WTC11 (cell line): ENCODE measurements at regions of chr14 and their contacts with region 1.

Region 1: DNA sequence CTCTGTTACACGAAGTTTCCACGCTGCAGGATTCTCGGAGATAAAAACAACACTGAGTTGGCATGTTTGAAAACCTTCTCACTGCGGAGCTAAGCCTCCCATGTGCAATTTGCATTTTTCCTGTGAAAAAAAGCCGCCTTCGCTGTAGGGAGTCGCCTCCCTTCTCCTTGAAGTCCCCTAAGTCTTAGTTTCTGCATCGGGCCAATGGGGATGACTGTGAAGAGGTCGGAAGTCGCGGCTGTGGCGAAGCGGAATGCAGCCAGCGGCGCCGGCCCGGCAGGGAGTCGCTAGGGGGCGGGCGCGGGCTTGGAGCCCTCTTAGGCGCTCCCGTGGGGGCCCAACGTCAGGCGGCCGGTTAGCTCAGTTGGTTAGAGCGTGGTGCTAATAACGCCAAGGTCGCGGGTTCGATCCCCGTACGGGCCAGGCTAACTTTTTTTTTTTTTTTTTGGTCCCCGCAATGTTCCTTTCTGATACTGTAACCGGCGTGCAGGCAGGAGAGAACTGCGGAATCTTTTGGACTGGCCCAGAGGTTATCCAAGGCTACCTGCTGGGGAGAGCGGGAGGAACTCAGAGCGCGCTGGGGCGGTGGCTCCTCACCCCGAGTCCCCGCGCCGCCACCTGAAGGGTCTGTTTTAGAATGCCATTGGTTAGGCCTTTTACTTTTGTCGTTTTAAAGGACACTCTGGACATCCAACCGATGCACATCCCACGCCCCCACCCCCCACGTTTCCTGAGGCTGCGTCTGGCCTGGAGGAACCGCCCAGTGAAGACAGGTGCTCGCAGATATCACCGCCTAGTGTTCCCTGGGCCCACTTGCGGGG is 2.6 kb upstream of the ZNF839 start:
- DNase-seq: peak; percentile 92
- ATAC-seq: peak; percentile 66
- H3K4me3 Mint-ChIP-seq: peak overlapping the region; percentile 93
- H3K27ac Mint-ChIP-seq: peak overlapping the region; percentile 98
- H3K4me1 Mint-ChIP-seq: peaks cover 49% of the 10 kb centered on the region
- H3K27me3 Mint-ChIP-seq: peaks cover 25% of the 10 kb centered on the region
- CTCF ChIP-seq: no peak

Region 2: GRCh38 chr14:102046343-102047278 is 270.3 kb before region 1 on chr14:
- CTCF ChIA-PET with region 1: interaction called, 21 read pairs
- POLR2A ChIA-PET with region 1: interaction called, 3 read pairs
- DNase-seq: peak; percentile 93
- ATAC-seq: peak; percentile 99
- H3K4me3 Mint-ChIP-seq: no peak overlapping the region
- H3K27ac Mint-ChIP-seq: peak overlapping the region; percentile 84
- H3K4me1 Mint-ChIP-seq: peaks cover 3% of the 10 kb centered on the region
- H3K27me3 Mint-ChIP-seq: no peaks in the 10 kb centered on the region
- CTCF ChIP-seq: no peak

Region 3: DNA sequence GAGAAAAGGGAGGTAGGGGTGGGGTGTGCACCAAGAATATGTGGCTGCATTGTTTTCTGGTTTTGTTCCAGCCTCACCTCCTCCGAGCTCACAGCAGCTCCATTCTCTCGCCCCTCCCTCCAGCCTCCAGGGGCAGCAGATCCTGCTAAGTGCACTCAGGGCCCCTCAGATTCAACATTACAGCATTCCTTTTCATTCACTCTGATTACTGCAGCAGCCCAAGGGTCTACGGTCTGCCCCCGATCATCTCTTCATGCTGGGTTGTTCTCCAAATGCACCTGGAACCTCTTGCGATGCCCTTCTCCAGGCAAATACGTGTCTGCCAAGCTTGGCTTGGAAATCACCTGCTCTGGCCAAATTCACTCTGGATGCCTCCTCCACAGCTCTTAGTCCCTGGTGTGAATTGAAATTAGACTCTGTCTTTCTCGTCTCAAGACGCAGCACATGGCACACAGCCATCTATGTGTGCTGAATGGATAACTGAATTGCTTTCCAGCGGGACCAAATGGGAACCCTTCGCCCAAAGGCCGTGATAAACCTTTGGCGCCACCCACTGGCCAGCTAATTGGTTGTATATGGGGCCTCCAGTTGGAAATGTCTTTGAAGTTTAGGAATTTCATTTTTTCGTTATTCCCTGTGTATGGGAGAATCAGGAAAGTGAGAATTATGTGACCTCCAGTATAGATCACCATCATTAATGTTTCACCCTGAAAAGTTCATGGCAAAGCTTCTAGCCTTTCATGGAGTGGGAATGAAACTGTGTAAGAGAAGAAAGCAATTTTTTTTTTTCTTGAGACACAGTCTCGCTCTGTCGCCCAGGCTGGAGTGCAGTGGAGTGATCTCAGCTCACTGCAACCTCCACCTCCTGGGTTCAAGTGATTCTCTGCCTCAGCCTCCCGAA is 220.5 kb before region 1 on chr14:
- CTCF ChIA-PET with region 1: interaction called, 11 read pairs
- POLR2A ChIA-PET with region 1: interaction called, 4 read pairs
- DNase-seq: peak; percentile 87
- ATAC-seq: peak; percentile 70
- H3K4me3 Mint-ChIP-seq: 0 out of 2 replicates have a peak overlapping the region, but pooled peaks have one; percentile 2
- H3K27ac Mint-ChIP-seq: peak overlapping the region; percentile 39; the same call in 1 of the 2 replicates
- H3K4me1 Mint-ChIP-seq: peaks cover 27% of the 10 kb centered on the region
- H3K27me3 Mint-ChIP-seq: no peaks in the 10 kb centered on the region; the same call in 1 of the 2 replicates
- CTCF ChIP-seq: peak; percentile 55; the same call in 1 of the 2 replicates

Region 4: GRCh38 chr14:102235275-102235897 is 81.6 kb before region 1 on chr14:
- CTCF ChIA-PET with region 1: interaction called, 33 read pairs
- POLR2A ChIA-PET with region 1: no interaction called
- DNase-seq: peak; percentile 88
- ATAC-seq: peak; percentile 96
- H3K4me3 Mint-ChIP-seq: no peak overlapping the region
- H3K27ac Mint-ChIP-seq: no peak overlapping the region
- H3K4me1 Mint-ChIP-seq: no peaks in the 10 kb centered on the region
- H3K27me3 Mint-ChIP-seq: peaks cover under 1% of the 10 kb centered on the region; the same call in 1 of the 2 replicates
- CTCF ChIP-seq: peak; percentile 80

Region 5: GRCh38 chr14:102304611-102305509 is 12.1 kb before region 1 on chr14 and contains the start of gene MOK:
- CTCF ChIA-PET with region 1: interaction called, 25 read pairs
- POLR2A ChIA-PET with region 1: no interaction called
- DNase-seq: peak; percentile 99
- ATAC-seq: peak; percentile 94
- H3K4me3 Mint-ChIP-seq: peak within 1 kb of the TSS; percentile 95
- H3K27ac Mint-ChIP-seq: peak within 1 kb of the TSS; percentile 58
- H3K4me1 Mint-ChIP-seq: peaks cover 3% of the 10 kb centered on the region; the same call in 1 of the 2 replicates
- H3K27me3 Mint-ChIP-seq: peaks cover 4% of the 10 kb centered on the region
- CTCF ChIP-seq: no peak
- total RNA-seq, gene MOK: 2.0 to 2.7 TPM (median 2.6 TPM) in 3 replicates

Region 6: GRCh38 chr14:102390064-102390855 is 73.3 kb after region 1 on chr14:
- CTCF ChIA-PET with region 1: no interaction called
- POLR2A ChIA-PET with region 1: no interaction called
- DNase-seq: no peak
- ATAC-seq: no peak
- H3K4me3 Mint-ChIP-seq: no peak overlapping the region
- H3K27ac Mint-ChIP-seq: peak overlapping the region; percentile 11; the same call in 1 of the 2 replicates
- H3K4me1 Mint-ChIP-seq: peaks cover 22% of the 10 kb centered on the region
- H3K27me3 Mint-ChIP-seq: no peaks in the 10 kb centered on the region
- CTCF ChIP-seq: no peak